Dendritic cell treated with granulocyte-macrophage colony-stimulating factor and Interleukin-4, amounts not matched to agents 40 ng/mL and 50 ng/mL, for 4 days (primary cell): ENCODE measurements at regions of chr2 and their contacts with region 1.

Region 1: DNA sequence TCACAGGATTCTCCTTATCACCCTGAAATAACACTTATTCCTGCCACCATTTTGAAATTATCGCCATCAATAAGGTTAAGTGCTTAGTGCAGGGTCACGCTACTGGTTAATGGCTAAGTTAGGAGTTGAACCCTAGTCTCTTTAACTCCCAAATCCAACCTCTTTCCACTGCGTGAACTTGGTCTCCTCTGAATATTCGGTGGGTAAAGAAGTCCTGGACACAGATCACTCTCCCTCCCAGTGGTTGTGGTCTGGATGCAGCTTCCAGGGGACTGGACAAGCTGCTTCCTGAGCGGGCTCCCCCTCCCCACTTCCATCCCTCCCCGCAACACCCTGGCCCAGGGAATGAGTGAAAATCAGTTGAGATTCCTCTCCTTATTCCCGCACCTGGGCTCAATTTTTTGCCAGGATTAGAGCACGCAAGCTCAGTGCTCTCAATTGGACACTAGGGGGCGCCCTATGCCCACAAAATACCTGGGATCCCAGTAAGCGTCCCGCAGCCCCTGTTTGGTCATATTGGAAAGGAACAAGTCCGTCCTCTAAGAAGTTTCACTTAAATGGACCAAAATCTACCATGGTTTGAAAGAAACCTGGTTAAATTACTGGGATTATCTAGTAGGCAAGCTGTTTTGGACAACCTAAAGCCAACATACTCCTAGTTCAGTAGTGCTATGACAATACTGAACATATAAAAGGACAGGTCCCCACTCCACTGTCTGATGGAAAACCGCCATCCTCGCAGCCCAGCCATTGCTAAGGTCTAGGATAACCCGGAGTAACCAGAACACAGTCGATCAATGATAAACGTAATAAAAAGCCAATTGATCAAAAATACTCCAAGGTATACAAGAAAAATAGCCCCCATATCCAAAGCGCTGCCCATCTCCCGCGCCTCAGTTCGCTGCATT is 40.4 kb downstream of the DHRS9 start:
- H3K4me3 Mint-ChIP-seq: no peak overlapping the region
- H3K27ac Mint-ChIP-seq: no peak overlapping the region
- H3K4me1 Mint-ChIP-seq: peaks cover 42% of the 10 kb centered on the region
- H3K27me3 Mint-ChIP-seq: peaks cover 7% of the 10 kb centered on the region

Region 2: GRCh38 chr2:169080250-169081069 is 29.3 kb before region 1 on chr2:
- intact Hi-C with region 1: no loop called
- H3K4me3 Mint-ChIP-seq: no peak overlapping the region
- H3K27ac Mint-ChIP-seq: peak overlapping the region; percentile 80
- H3K4me1 Mint-ChIP-seq: peaks cover 73% of the 10 kb centered on the region
- H3K27me3 Mint-ChIP-seq: no peaks in the 10 kb centered on the region

Region 3: GRCh38 chr2:169131587-169132512 is 22.1 kb after region 1 on chr2:
- intact Hi-C with region 1: loop called (anchors 2 kb)
- H3K4me3 Mint-ChIP-seq: no peak overlapping the region
- H3K27ac Mint-ChIP-seq: no peak overlapping the region
- H3K4me1 Mint-ChIP-seq: no peaks in the 10 kb centered on the region
- H3K27me3 Mint-ChIP-seq: no peaks in the 10 kb centered on the region

Region 4: DNA sequence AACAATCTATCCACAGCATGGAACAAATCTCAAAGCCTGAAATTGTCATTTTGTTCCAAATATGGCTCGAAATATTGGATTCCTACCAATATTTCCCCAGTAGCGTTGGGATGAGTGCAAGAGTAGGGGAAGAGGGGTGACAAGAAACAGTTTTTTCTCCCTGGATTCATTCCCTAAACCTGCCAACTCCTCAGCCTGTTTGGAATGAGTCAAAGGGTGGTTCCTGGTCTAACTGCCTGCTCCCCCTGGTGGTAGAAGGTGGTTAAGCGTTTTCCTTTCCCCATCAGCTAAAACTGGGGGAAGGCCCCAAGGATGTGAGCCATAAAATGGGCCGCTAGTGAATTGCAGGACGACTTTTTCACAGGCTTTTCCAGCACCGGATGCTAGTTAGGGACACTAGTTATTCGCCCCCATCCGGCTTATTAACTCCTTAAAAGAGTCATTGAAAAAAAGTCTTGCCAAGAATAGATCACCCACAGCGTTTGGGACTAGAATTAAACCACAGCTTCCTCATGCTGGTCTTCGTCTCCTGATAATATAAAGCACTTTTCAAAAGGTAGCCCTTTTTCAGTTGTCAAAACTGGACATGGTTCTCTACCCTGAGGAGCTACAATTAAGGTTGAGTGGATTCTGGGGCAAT is 32.1 kb after region 1 on chr2:
- intact Hi-C with region 1: loop called (anchors 1 kb)
- H3K4me3 Mint-ChIP-seq: no peak overlapping the region
- H3K27ac Mint-ChIP-seq: no peak overlapping the region
- H3K4me1 Mint-ChIP-seq: no peaks in the 10 kb centered on the region
- H3K27me3 Mint-ChIP-seq: no peaks in the 10 kb centered on the region

Region 5: DNA sequence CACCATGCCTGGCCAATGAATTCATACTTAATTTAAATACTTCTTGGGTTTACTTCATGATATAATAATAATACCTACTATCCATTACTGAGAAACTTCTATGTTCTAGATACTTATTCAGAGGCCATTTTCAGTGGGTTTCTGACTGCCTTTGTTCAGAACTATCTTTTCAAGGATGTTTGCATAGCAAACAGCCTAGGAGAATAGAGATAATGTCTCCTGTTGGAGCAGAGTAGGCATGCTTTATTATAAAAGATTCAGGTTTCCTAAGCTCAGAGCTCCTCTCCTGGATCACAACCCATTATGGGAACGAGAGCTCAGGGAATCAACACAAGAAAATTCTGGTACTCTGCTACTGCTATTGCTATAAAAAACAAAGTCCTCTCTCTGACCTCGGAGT is 452.8 kb after region 1 on chr2:
- intact Hi-C with region 1: no loop called
- H3K4me3 Mint-ChIP-seq: no peak overlapping the region
- H3K27ac Mint-ChIP-seq: no peak overlapping the region
- H3K4me1 Mint-ChIP-seq: no peaks in the 10 kb centered on the region
- H3K27me3 Mint-ChIP-seq: no peaks in the 10 kb centered on the region